ENCODE measurements at regions of chr17 and their contacts with region 1.

Region 1: DNA sequence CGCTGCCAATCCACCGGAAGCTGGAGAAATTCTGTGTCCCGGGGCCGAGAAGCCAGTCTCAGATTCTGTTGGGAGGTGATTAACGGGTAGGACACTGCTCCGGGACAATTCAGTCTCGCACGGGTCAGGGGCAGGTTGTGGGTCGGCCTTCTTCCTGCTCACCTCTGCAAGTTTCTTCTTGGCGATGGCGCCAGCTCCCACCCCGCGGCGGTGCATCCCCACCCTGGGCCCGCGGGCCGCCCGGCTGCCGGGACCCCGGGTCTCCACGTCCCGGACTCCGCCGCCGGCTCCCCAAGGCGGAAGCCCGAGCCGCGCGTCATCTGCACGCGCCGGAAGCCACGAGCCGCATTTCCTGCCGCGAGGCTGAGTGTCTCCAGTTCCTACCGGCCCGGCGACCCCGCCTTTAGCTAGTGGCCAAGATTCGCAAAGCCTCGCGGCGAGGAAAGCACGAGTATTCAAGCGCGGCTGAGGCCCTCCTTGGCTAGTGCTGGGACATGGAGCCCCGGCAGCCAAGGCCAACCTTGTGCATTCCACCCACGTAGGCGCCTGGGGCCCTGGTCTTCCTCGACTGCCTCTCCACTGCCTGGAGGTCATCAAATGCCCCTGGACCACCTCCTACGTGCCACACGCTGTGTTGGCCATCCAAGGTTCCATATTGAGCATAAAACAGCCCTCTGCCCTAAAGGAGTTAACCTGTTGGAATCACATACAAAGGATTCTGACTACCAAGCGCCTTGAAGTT is at the start of gene SNF8:
- DNase-seq: peak; percentile 93
- ATAC-seq: peak; percentile 92
- H3K4me3 ChIP-seq: peak within 1 kb of the TSS; percentile 80 to 99 (median 91)
- H3K4me3 Mint-ChIP-seq: peak within 1 kb of the TSS; percentile 93
- H3K27ac ChIP-seq: peak within 1 kb of the TSS; percentile 87 to 97
- H3K27ac Mint-ChIP-seq: peak within 1 kb of the TSS; percentile 93
- H3K4me1 ChIP-seq: peaks cover 12 to 21% of the 10 kb centered on the region in 2 donors
- H3K4me1 Mint-ChIP-seq: peaks cover 15% of the 10 kb centered on the region
- H3K27me3 ChIP-seq: no peaks in the 10 kb centered on the region
- H3K27me3 Mint-ChIP-seq: no peaks in the 10 kb centered on the region
- CTCF ChIP-seq: no peak
- total RNA-seq, gene SNF8: 77.5 and 81.9 TPM in 2 replicates

Region 2: GRCh38 chr17:48928876-48929811 is 15.5 kb before region 1 on chr17:
- CTCF ChIA-PET with region 1: no interaction called
- POLR2A ChIA-PET with region 1: interaction called, 11 read pairs
- intact Hi-C with region 1: no loop called
- DNase-seq: no peak
- ATAC-seq: no peak
- H3K4me3 ChIP-seq: no peak overlapping the region
- H3K4me3 Mint-ChIP-seq: no peak overlapping the region
- H3K27ac ChIP-seq: no peak overlapping the region
- H3K27ac Mint-ChIP-seq: no peak overlapping the region
- H3K4me1 ChIP-seq: no peaks in the 10 kb centered on the region
- H3K4me1 Mint-ChIP-seq: peaks cover 4% of the 10 kb centered on the region
- H3K27me3 ChIP-seq: no peaks in the 10 kb centered on the region
- H3K27me3 Mint-ChIP-seq: no peaks in the 10 kb centered on the region
- CTCF ChIP-seq: no peak

Measured in B cell (primary cell).